ENCODE measurements at regions of chrX and their contacts with region 1.

Region 1: DNA sequence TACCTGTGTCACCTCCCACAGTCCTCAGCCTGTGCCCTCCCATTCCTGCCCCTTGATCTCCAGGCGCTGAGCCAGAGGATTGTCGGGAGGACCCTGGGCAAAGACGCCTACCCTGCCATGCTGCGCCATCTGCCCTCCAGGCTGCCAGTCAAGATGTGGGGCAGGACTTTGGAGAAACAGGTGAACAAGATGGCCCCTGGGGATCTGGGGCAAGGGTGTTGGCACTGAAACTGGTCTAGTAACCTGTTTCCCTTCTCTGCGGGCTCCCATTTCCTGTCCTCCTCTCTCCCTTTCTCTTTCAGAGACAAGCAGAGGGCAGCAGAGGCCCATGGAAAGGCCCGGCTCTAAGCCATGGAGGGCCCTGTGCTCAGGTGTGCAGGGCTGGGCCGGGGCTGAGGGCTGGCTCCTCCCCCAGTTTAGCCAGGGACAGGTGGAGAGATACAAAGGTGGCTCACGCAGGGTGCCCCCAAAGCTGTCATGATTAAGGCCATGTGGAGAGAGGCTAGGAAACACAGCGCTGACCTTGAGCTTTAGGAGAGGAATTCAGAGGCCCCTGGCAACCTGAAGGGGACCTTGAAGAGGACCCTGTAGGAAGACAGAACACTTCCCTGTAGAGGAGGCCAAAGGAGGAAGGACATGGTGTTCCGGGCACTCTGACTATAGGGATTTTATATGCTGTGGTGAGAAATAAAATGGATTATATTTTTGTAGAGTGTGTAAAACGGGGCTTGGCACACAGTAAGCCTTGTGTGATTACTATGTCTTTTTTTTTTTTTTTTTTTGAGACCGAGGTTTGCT is at the start of gene GLOD5:
- DNase-seq: peak; percentile 80 to 82
- H3K4me3 ChIP-seq: no peak within 1 kb of the TSS
- H3K4me3 Mint-ChIP-seq: peak within 1 kb of the TSS; percentile 65
- H3K27ac Mint-ChIP-seq: peak within 1 kb of the TSS; percentile 95
- H3K4me1 ChIP-seq: 0 out of 2 replicates have a peak, but pooled peaks cover 3% of the 10 kb centered on the region
- H3K4me1 Mint-ChIP-seq: peaks cover 9% of the 10 kb centered on the region
- H3K27me3 ChIP-seq: no peaks in the 10 kb centered on the region
- H3K27me3 Mint-ChIP-seq: no peaks in the 10 kb centered on the region
- CTCF ChIP-seq: peak; percentile 36 to 71
- total RNA-seq, gene GLOD5: not detected in 2 replicates

Region 2: GRCh38 chrX:48631350-48632090 is 130.4 kb before region 1 on chrX:
- CTCF ChIA-PET with region 1: no interaction called
- POLR2A ChIA-PET with region 1: no interaction called
- intact Hi-C with region 1: loop called (anchors 5 kb)
- DNase-seq: peak; percentile 90 to 92
- H3K4me3 ChIP-seq: no peak overlapping the region
- H3K4me3 Mint-ChIP-seq: peak overlapping the region; percentile 22
- H3K27ac Mint-ChIP-seq: peak overlapping the region; percentile 39
- H3K4me1 ChIP-seq: peaks cover 5% of the 10 kb centered on the region
- H3K4me1 Mint-ChIP-seq: no peaks in the 10 kb centered on the region
- H3K27me3 ChIP-seq: no peaks in the 10 kb centered on the region
- H3K27me3 Mint-ChIP-seq: no peaks in the 10 kb centered on the region
- CTCF ChIP-seq: peak; percentile 31 to 49

Region 3: GRCh38 chrX:48945516-48946348 is 183.9 kb after region 1 on chrX:
- CTCF ChIA-PET with region 1: no interaction called
- POLR2A ChIA-PET with region 1: no interaction called
- intact Hi-C with region 1: loop called (anchors 5 kb)
- DNase-seq: peak; percentile 42 to 57
- H3K4me3 ChIP-seq: no peak overlapping the region
- H3K4me3 Mint-ChIP-seq: no peak overlapping the region
- H3K27ac Mint-ChIP-seq: no peak overlapping the region
- H3K4me1 ChIP-seq: no peaks in the 10 kb centered on the region
- H3K4me1 Mint-ChIP-seq: no peaks in the 10 kb centered on the region
- H3K27me3 ChIP-seq: no peaks in the 10 kb centered on the region
- H3K27me3 Mint-ChIP-seq: no peaks in the 10 kb centered on the region
- CTCF ChIP-seq: peak; percentile 69 to 88